ENCODE measurements at regions of chr12 and their contacts with region 1.

Region 1: DNA sequence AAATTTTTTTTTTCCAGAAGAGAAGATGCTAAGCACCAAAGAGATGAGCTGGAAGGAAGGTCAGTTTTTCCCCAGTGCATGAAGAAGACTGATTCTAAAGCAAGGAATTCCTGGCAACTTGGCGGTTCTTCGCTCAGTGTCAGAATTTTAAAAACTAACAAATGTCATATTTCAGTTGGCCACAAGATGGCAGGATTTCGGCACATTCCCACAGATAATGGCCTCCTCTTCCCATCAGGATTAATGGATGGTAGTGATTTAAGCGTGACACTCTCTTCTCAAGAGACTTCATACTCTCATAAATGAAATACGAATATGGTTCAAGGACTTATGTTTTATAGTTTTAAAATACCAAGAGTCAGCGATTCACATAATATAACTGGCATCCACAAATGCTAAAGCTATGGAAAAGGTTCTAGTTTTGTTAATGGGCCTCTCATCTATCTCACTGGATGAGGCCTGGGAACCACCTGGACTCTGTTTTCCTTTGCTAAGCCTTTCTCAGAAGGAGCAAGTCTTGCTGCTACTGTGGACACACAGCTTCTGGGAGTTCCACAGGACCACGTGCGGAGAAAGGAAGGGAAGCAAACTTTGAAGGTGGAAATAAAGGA is 46.1 kb upstream of the PTPRO start:
- DNase-seq: no peak
- H3K4me3 Mint-ChIP-seq: no peak overlapping the region
- H3K27ac Mint-ChIP-seq: no peak overlapping the region
- H3K4me1 Mint-ChIP-seq: no peaks in the 10 kb centered on the region
- H3K27me3 Mint-ChIP-seq: peaks cover 2% of the 10 kb centered on the region

Region 2: GRCh38 chr12:14167005-14167628 is 1109.1 kb before region 1 on chr12:
- intact Hi-C with region 1: no loop called
- DNase-seq: peak; percentile 8
- H3K4me3 Mint-ChIP-seq: no peak overlapping the region
- H3K27ac Mint-ChIP-seq: no peak overlapping the region
- H3K4me1 Mint-ChIP-seq: no peaks in the 10 kb centered on the region
- H3K27me3 Mint-ChIP-seq: peaks cover 5% of the 10 kb centered on the region

Region 3: GRCh38 chr12:15244341-15244740 is 31.9 kb before region 1 on chr12:
- intact Hi-C with region 1: no loop called
- DNase-seq: no peak
- H3K4me3 Mint-ChIP-seq: no peak overlapping the region
- H3K27ac Mint-ChIP-seq: no peak overlapping the region
- H3K4me1 Mint-ChIP-seq: no peaks in the 10 kb centered on the region
- H3K27me3 Mint-ChIP-seq: peaks cover 18% of the 10 kb centered on the region

Region 4: GRCh38 chr12:15522565-15523187 is 246.5 kb after region 1 on chr12:
- intact Hi-C with region 1: loop called (anchors 1 kb)
- DNase-seq: no peak
- H3K4me3 Mint-ChIP-seq: no peak overlapping the region
- H3K27ac Mint-ChIP-seq: no peak overlapping the region
- H3K4me1 Mint-ChIP-seq: no peaks in the 10 kb centered on the region
- H3K27me3 Mint-ChIP-seq: peaks cover 27% of the 10 kb centered on the region

Measured in activated T-helper 1 cell treated with anti-CD3 and anti-CD28 coated beads, Interleukin-12 subunit alpha, Interleukin-12 subunit beta, Interleukin-2, Interleukin-4 antibody, amounts not matched to agents 30 ng/mL and 10 ng/mL and 1 ng/mL, durations not matched to agents 14 hours and 24 hours and 36 hours (primary cell).